AG04449 (cell line): ENCODE measurements at regions of chr3 and their contacts with region 1.

Region 1: GRCh38 chr3:190120269-190121060 is at the start of gene P3H2:
- DNase-seq: no peak
- H3K4me3 ChIP-seq: peak within 1 kb of the TSS; percentile 78
- CTCF ChIP-seq: peak; percentile 77

Region 2: GRCh38 chr3:189898559-189899153 is 221.8 kb before region 1 on chr3:
- CTCF ChIA-PET with region 1: no interaction called
- POLR2A ChIA-PET with region 1: no interaction called
- DNase-seq: no peak
- H3K4me3 ChIP-seq: no peak overlapping the region
- CTCF ChIP-seq: no peak

Region 3: GRCh38 chr3:190017521-190018288 is 102.8 kb before region 1 on chr3:
- CTCF ChIA-PET with region 1: interaction called, 12 read pairs
- POLR2A ChIA-PET with region 1: interaction called, 4 read pairs
- DNase-seq: no peak
- H3K4me3 ChIP-seq: no peak overlapping the region
- CTCF ChIP-seq: peak; percentile 26